Naive thymus-derived CD8-positive, alpha-beta T cell (primary cell): ENCODE measurements at regions of chr19 and their contacts with region 1.

Region 1: DNA sequence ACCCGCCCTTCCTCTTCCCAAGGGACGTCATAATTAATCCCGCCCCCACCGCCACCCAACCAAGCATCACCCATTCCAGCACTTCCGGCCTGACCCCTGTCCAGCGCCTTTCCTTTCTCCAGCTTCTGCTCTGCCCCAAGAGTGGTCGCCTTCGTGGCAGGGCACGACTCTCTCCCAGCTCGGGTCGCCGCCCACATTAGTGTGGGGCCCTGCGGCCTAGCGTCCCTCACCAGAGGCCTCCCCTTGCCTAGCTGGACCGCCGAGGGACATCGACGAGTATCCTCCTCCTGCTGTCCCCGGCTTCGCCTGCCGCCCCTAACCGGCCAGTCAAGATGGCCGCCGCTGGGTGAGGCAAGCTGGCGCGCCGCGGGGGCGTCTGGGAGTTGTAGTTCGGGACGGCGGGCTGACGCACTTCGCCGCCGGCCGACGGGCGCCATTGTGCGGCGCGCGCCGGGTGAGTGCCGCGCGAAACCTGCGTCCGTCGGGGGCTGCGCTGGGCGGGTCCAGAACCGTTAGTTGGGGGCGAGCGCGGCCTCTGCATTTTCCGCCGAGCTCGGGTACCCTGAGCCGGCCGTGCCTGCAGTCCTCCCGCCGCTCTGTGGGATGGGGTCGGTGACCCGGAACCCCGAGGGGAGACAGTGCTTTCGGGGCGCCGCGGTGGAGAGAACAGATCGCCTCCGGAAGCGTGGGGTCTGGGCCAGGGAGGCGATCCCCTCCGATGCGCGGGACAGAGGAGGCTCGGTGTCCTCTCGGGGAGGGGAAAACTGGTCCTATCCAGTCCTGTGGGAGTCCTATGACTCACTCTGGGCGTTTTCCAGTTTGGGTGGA is at the start of gene ZNF274:
- DNase-seq: peak; percentile 85 to 96 (median 94)
- ATAC-seq: peak; percentile 87 to 91
- H3K4me3 Mint-ChIP-seq: peak within 1 kb of the TSS; percentile 87 to 98 (median 90)
- H3K27ac Mint-ChIP-seq: peak within 1 kb of the TSS; percentile 96 to 100 (median 99)
- H3K4me1 Mint-ChIP-seq: peaks cover 11 to 31% (median 22%) of the 10 kb centered on the region in 4 donors
- H3K27me3 Mint-ChIP-seq: no peaks in the 10 kb centered on the region
- polyA plus RNA-seq, gene ZNF274: 26.5 to 38.7 (median 34.9) TPM

Region 2: DNA sequence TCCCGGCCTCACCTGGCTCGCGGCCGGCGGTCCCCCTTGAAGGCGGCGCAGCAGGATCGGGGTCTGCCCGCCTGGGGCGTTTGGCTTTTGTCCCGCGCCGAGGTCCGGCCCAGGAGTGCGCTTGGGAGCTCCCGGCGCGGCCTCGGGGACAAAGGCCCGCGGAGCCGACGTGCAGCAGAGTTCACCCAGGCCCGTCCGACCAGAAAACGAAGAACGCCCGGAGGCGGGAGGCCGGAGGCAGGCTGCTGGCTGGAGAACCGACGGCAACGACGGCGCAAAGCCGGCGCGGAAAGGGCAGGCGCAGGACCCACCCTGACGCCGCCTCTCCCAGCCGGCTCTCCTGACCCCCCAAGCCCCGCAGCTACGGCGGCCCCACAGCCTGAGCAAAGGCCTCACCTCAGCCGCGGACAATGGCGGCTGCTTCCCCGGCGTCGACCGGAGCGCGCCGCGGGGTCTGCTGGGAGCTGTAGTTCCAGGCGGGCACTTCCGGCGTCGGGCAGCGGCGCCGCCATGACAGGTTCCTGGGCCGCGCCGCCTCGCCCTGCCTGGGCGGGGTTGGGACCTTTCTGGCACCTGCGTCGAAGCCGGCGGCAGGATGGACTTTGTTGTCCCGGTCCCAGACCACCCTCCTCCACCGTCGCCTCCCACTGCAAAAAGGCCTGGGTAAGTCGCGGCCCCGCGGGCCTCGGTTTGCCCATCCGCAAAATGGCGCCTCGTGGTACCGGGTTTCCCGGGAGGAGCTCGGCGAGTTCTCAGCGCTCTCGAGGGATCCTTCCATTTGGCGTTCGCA is 180.6 kb before region 1 on chr19 and contains the start of gene ZNF606:
- POLR2A ChIA-PET with region 1: interaction called, 21 read pairs
- DNase-seq: peak; percentile 78 to 89 (median 84)
- ATAC-seq: peak; percentile 97
- H3K4me3 Mint-ChIP-seq: peak within 1 kb of the TSS; percentile 80 to 91 (median 86)
- H3K27ac Mint-ChIP-seq: peak within 1 kb of the TSS; percentile 87 to 95 (median 94)
- H3K4me1 Mint-ChIP-seq: peaks cover 12 to 35% (median 33%) of the 10 kb centered on the region in 4 donors
- H3K27me3 Mint-ChIP-seq: no peaks in the 10 kb centered on the region
- polyA plus RNA-seq, gene ZNF606: 2.1 to 6.5 (median 6.0) TPM

Region 3: GRCh38 chr19:58154679-58155648 is 28.2 kb before region 1 on chr19:
- POLR2A ChIA-PET with region 1: interaction called, 10 read pairs
- DNase-seq: peak; percentile 93 to 100 (median 98)
- ATAC-seq: peak; percentile 77 to 91
- H3K4me3 Mint-ChIP-seq: peak overlapping the region; percentile 81 to 93 (median 82)
- H3K27ac Mint-ChIP-seq: peak overlapping the region; percentile 57 to 92 (median 84)
- H3K4me1 Mint-ChIP-seq: peaks cover 6 to 31% (median 20%) of the 10 kb centered on the region in 4 donors
- H3K27me3 Mint-ChIP-seq: no peaks in the 10 kb centered on the region

Region 4: GRCh38 chr19:58228585-58229254 is 45.5 kb after region 1 on chr19 and contains the start of gene ZNF544:
- POLR2A ChIA-PET with region 1: interaction called, 18 read pairs
- DNase-seq: peak; percentile 8 to 68 (median 40)
- ATAC-seq: peak; percentile 83 to 86
- H3K4me3 Mint-ChIP-seq: peak within 1 kb of the TSS; percentile 90 to 97 (median 95)
- H3K27ac Mint-ChIP-seq: peak within 1 kb of the TSS; percentile 86 to 95 (median 92)
- H3K4me1 Mint-ChIP-seq: peaks cover 19 to 37% (median 28%) of the 10 kb centered on the region in 4 donors
- H3K27me3 Mint-ChIP-seq: no peaks in the 10 kb centered on the region
- polyA plus RNA-seq, gene ZNF544: 19.5 to 35.2 (median 23.9) TPM

Region 5: GRCh38 chr19:58305065-58305931 is 122.1 kb after region 1 on chr19 and contains the start of gene ERVK3-1:
- POLR2A ChIA-PET with region 1: interaction called, 16 read pairs
- DNase-seq: peak; percentile 84 to 98 (median 94)
- ATAC-seq: peak; percentile 94 to 95
- H3K4me3 Mint-ChIP-seq: peak within 1 kb of the TSS; percentile 95 to 100 (median 100)
- H3K27ac Mint-ChIP-seq: peak within 1 kb of the TSS; percentile 99 to 100 (median 100)
- H3K4me1 Mint-ChIP-seq: peaks cover 19 to 63% (median 54%) of the 10 kb centered on the region in 4 donors
- H3K27me3 Mint-ChIP-seq: no peaks in the 10 kb centered on the region
- polyA plus RNA-seq, gene ERVK3-1: 55.1 to 80.9 (median 72.0) TPM